ENCODE measurements at regions of chr11 and their contacts with region 1.

Region 1: GRCh38 chr11:22349491-22349890 is 11.3 kb downstream of the SLC17A6 start:
- DNase-seq: no peak
- H3K4me3 ChIP-seq: no peak overlapping the region
- H3K27ac ChIP-seq: no peak overlapping the region
- H3K4me1 ChIP-seq: peaks cover 0 to 5% (median 1%) of the 10 kb centered on the region in 4 experiments; a peak in 4 of 7 replicates
- H3K27me3 ChIP-seq: no peaks in the 10 kb centered on the region
- CTCF ChIP-seq: no peak
- EP300 ChIP-seq: no peak
- POLR2A ChIP-seq: no peak
- RAD21 ChIP-seq: no peak

Region 2: DNA sequence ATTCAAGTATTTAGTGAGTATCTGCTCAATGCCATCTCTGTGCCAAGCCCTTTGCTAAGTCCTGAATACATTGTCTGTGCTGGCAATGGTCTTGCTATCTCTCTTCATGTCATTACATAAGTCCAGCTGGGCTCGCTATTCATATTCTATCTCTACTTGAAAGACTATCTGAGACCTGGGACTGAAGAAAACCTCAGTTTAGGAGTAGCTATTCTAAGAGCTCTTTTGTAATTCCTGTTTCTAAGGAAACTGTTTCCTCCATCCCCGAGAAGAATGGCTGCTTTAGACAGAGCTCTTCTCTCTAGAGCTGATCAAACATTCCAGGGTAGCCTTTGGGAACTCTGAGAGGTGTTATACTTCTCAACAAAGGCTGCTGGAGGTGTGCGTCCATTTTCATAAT is 21.7 kb after region 1 on chr11:
- CTCF ChIA-PET with region 1: interaction called, 11 read pairs
- POLR2A ChIA-PET with region 1: no interaction called
- DNase-seq: no peak
- H3K4me3 ChIP-seq: peak overlapping the region in 1 of 4 experiments; percentile 36; a peak in 1 of 8 replicates
- H3K27ac ChIP-seq: no peak overlapping the region
- H3K4me1 ChIP-seq: peaks cover 0 to 9% (median 2%) of the 10 kb centered on the region in 4 experiments; a peak in 1 of 7 replicates
- H3K27me3 ChIP-seq: no peaks in the 10 kb centered on the region
- CTCF ChIP-seq: no peak
- EP300 ChIP-seq: no peak
- POLR2A ChIP-seq: no peak
- RAD21 ChIP-seq: no peak

Region 3: DNA sequence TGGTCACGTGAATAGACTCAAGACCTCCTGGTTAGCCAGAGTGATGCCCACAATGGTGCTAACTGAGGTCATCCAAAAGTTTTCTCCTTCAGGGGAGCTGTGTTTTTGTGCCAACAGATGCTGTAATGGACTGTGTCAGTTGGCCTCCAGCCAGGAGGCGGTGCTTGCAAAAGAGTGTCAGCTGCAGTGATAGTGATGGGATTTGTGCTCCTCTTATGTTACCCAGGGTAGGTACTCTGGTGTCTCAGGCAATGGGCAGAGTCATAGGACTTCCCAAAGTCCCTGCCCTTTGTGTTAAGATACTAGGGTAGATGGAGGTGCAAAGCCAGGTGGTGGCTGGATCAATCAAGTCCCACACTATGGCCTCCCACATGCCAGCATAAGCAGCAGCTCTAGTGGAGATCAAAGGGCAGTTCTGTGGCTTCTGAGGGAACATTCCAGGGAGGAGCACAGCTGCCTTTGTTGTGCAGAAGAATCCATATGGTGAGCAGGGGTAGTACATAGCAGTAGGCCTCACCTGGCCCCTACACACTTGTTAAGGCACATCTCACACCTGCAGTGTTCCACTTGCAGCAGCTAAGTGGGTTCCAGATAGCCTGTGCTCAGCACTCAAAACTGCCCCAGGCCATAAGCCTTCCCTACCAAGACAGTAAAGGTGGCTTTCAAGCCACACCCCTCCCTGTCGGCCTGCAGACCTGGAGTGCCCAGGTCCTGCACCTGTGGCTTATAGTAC is 285.6 kb after region 1 on chr11:
- CTCF ChIA-PET with region 1: no interaction called
- POLR2A ChIA-PET with region 1: no interaction called
- DNase-seq: no peak
- H3K4me3 ChIP-seq: no peak overlapping the region
- H3K27ac ChIP-seq: no peak overlapping the region
- H3K4me1 ChIP-seq: peaks cover 0 to 10% (median 4%) of the 10 kb centered on the region in 4 experiments; a peak in 4 of 7 replicates
- H3K27me3 ChIP-seq: no peaks in the 10 kb centered on the region
- CTCF ChIP-seq: no peak
- EP300 ChIP-seq: no peak
- POLR2A ChIP-seq: no peak
- RAD21 ChIP-seq: no peak

Measured in H1 (cell line).